WTC11 (cell line): ENCODE measurements at regions of chr21 and their contacts with region 1.

Region 1: DNA sequence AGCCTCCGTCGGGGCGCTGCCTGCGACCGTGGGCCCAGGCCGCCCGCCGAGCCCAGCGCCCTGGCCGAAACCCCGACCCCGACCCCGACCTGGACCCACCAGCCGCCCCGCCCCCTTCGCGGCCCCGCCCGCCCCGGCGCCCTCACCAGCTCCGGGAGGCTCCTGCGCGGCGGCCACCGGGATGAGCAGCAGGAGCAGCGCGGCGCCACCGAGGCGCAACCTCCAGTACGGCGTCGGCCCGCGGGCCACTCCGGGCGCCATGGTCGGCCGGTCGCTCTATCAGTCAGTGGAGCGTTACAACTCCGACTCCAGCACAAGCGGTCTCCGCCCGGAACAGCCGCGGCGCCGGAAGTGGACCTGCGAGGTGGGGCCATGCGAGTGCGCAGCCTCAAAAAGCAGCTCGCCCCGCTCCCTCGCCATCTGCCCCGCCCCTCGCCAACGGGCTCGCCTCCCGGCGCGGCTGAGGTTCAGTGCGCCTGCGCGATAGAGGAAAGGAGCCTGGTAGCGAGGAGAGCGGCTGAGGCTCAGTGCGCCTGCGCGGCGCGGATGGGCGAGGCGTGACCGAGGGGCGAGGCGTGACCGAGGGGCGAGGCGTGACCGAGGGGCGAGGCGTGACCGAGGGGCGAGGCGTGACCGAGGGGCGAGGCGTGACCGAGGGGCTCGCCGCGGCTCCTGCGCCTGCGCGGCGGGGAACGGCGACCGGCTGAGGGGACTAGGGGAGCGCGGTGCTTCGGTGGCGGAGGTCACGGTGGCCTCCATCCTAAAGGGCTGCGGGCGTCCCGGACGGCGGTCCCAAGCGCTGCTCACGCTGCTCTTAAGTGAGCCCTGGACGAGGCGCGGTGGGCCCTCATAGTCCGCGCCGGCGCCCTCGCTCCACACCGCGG is at the start of gene PTTG1IP:
- DNase-seq: peak; percentile 99
- ATAC-seq: peak; percentile 81
- H3K4me3 Mint-ChIP-seq: peak within 1 kb of the TSS; percentile 82
- H3K27ac Mint-ChIP-seq: peak within 1 kb of the TSS; percentile 68; the same call in 1 of the 2 replicates
- H3K4me1 Mint-ChIP-seq: peaks cover 47% of the 10 kb centered on the region
- H3K27me3 Mint-ChIP-seq: peaks cover 25% of the 10 kb centered on the region
- CTCF ChIP-seq: no peak
- total RNA-seq, gene PTTG1IP: 96.0 to 117 TPM (median 112 TPM) in 3 replicates

Region 2: GRCh38 chr21:44801468-44802395 is 71.9 kb before region 1 on chr21 and contains the start of gene UBE2G2:
- CTCF ChIA-PET with region 1: interaction called, 17 read pairs
- POLR2A ChIA-PET with region 1: interaction called, 5 read pairs
- DNase-seq: peak; percentile 71
- ATAC-seq: peak; percentile 73
- H3K4me3 Mint-ChIP-seq: peak within 1 kb of the TSS; percentile 93
- H3K27ac Mint-ChIP-seq: peak within 1 kb of the TSS; percentile 91
- H3K4me1 Mint-ChIP-seq: peaks cover 29% of the 10 kb centered on the region
- H3K27me3 Mint-ChIP-seq: no peaks in the 10 kb centered on the region
- CTCF ChIP-seq: no peak
- total RNA-seq, gene UBE2G2: 109 to 117 TPM (median 113 TPM) in 3 replicates